Right lobe of liver (tissue), 6 donors: ENCODE measurements at regions of chr15 and their contacts with region 1.

Region 1: DNA sequence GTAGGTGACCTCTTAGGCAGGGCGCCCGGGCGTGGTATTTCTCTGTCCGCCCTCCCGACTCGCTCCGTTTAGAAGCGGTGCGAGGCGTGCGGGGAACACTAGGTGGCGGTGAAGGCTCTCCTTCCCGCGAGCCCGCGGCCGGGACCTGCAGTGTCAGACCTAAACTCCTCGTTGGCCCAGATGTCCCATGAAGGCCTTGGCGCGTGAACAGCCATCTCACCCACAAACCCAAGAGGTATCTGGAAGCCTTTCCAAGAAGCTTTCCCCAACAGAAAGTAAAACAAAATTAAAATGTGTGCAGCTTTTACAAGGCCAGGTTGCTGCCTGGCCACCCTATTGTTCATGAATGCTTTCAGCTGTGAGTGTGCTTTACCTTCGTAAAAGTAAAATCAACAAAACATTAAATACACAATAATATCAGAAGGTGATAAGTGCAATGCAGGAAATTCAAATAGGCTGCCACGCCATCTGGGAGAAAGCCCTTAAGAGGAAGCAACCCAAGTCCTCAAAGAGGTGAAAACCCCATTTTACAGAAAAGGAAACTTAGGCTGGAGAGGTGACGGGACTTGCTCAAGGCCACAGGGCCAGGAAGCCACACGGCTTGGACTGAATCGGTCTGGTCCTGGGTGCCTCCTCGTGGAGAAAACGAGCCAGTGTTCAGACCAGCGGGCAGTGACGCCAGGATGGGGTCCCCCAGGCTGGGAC is 120.3 kb downstream of the ETFA start:
- DNase-seq: peak; percentile 82
- ATAC-seq: peak; percentile 92 to 98 (median 94)
- H3K4me3 ChIP-seq: no peak overlapping the region
- H3K27ac ChIP-seq: no peak overlapping the region
- H3K4me1 ChIP-seq: peaks cover 0 to 7% (median 2%) of the 10 kb centered on the region in 4 donors
- H3K27me3 ChIP-seq: no peaks in the 10 kb centered on the region
- CTCF ChIP-seq: peak; percentile 76 to 87 (median 84)
- POLR2A ChIP-seq: no peak

Region 2: DNA sequence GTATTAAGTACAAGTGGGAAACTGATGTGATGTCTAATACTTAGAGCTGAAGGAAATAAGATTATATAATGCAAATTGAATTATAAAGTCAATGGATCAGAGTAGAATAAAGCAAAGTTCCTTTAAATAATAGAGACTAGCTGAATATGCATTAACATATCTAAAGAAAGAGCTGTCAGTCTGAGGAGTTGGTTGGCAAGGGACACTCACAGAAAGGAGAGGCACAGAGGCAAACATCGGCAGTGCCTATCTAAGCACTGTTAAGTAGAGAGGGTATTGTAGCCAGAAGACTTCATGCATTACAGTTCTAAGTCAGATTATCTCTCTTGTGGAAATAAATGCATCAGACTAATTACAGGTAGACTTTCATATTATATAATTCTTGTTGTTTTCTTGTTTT is 195.4 kb before region 1 on chr15:
- intact Hi-C with region 1: no loop called
- DNase-seq: no peak
- ATAC-seq: no peak
- H3K4me3 ChIP-seq: no peak overlapping the region
- H3K27ac ChIP-seq: no peak overlapping the region
- H3K4me1 ChIP-seq: no peaks in the 10 kb centered on the region
- H3K27me3 ChIP-seq: no peaks in the 10 kb centered on the region
- CTCF ChIP-seq: no peak
- POLR2A ChIP-seq: no peak

Region 3: GRCh38 chr15:76253691-76254473 is 62.9 kb after region 1 on chr15:
- intact Hi-C with region 1: no loop called
- DNase-seq: no peak
- ATAC-seq: no peak
- H3K4me3 ChIP-seq: no peak overlapping the region
- H3K27ac ChIP-seq: no peak overlapping the region
- H3K4me1 ChIP-seq: no peaks in the 10 kb centered on the region
- H3K27me3 ChIP-seq: no peaks in the 10 kb centered on the region
- CTCF ChIP-seq: no peak
- POLR2A ChIP-seq: no peak

Region 4: DNA sequence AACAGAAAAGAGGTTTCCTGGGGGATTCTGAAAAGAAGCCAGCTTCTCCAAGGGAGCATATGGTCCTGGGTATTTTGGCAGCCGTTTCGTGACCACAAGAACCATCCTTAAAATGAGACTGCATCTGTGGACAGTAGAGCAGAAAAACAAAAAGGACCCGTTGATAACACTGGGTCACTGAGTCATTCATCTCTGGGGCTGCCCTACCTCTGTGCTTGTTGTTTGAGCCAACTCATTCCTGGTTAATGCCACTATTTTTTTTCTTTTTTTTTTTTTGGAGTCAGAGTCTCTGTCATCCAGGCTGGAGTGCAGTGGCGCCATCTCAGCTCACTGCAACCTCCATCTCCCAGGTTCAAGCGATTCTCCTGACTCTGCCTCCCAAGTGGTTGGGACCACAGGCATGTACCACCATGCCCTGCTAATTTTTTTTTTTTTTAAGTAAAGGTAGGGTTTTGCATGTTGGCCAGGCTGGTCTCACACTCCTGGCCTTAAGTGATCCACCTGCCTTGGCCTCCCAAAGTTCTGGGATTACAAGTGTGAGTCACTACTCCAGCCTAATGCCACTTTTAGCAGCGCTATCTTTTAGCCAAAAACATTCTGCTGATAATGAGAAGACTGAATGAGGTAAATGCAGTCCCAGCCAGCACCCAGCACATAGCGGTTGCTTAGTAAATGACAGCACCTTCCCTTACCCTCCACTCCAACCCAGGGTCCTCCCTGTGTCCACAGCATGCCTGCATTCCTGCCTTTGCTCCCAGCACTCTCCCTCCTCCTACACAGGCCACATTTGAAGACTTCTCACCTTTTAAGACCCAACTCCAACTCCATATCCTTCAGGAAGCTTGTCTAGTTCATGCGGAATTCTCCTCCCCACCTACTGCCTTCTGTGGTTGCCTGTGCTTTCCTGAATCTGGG is 136.5 kb after region 1 on chr15:
- intact Hi-C with region 1: loop called in 1 of 2 experiments (anchors 5 kb)
- DNase-seq: no peak
- ATAC-seq: no peak
- H3K4me3 ChIP-seq: no peak overlapping the region
- H3K27ac ChIP-seq: no peak overlapping the region
- H3K4me1 ChIP-seq: no peaks in the 10 kb centered on the region
- H3K27me3 ChIP-seq: no peaks in the 10 kb centered on the region
- CTCF ChIP-seq: no peak
- POLR2A ChIP-seq: no peak